ENCODE measurements at regions of chr3 and their contacts with region 1.

Region 1: GRCh38 chr3:115814778-115815380 is 191.6 kb downstream of the GAP43 start:
- DNase-seq: peak; percentile 87
- ATAC-seq: peak; percentile 91
- H3K4me3 Mint-ChIP-seq: no peak overlapping the region
- H3K27ac Mint-ChIP-seq: no peak overlapping the region
- H3K4me1 Mint-ChIP-seq: peaks cover 11% of the 10 kb centered on the region
- H3K27me3 Mint-ChIP-seq: no peaks in the 10 kb centered on the region
- CTCF ChIP-seq: peak; percentile 94

Region 2: GRCh38 chr3:115092220-115092791 is 722.6 kb before region 1 on chr3:
- CTCF ChIA-PET with region 1: interaction called, 11 read pairs
- POLR2A ChIA-PET with region 1: no interaction called
- DNase-seq: peak; percentile 44
- ATAC-seq: peak; percentile 93
- H3K4me3 Mint-ChIP-seq: no peak overlapping the region
- H3K27ac Mint-ChIP-seq: no peak overlapping the region; the same call in 1 of the 2 replicates
- H3K4me1 Mint-ChIP-seq: peaks cover 21% of the 10 kb centered on the region
- H3K27me3 Mint-ChIP-seq: no peaks in the 10 kb centered on the region
- CTCF ChIP-seq: 0 out of 2 replicates have a peak, but pooled peaks have one; percentile 8

Region 3: GRCh38 chr3:115523458-115523857 is 291.4 kb before region 1 on chr3:
- CTCF ChIA-PET with region 1: no interaction called
- POLR2A ChIA-PET with region 1: no interaction called
- DNase-seq: no peak
- ATAC-seq: peak; percentile 26; the same call in 1 of the 2 replicates
- H3K4me3 Mint-ChIP-seq: no peak overlapping the region
- H3K27ac Mint-ChIP-seq: no peak overlapping the region
- H3K4me1 Mint-ChIP-seq: peaks cover 24% of the 10 kb centered on the region
- H3K27me3 Mint-ChIP-seq: no peaks in the 10 kb centered on the region
- CTCF ChIP-seq: no peak

Region 4: GRCh38 chr3:115692887-115693524 is 121.9 kb before region 1 on chr3:
- CTCF ChIA-PET with region 1: interaction called, 11 read pairs
- POLR2A ChIA-PET with region 1: no interaction called
- DNase-seq: peak; percentile 80
- ATAC-seq: peak; percentile 94
- H3K4me3 Mint-ChIP-seq: no peak overlapping the region
- H3K27ac Mint-ChIP-seq: no peak overlapping the region
- H3K4me1 Mint-ChIP-seq: peaks cover 25% of the 10 kb centered on the region
- H3K27me3 Mint-ChIP-seq: no peaks in the 10 kb centered on the region
- CTCF ChIP-seq: peak; percentile 64

Region 5: DNA sequence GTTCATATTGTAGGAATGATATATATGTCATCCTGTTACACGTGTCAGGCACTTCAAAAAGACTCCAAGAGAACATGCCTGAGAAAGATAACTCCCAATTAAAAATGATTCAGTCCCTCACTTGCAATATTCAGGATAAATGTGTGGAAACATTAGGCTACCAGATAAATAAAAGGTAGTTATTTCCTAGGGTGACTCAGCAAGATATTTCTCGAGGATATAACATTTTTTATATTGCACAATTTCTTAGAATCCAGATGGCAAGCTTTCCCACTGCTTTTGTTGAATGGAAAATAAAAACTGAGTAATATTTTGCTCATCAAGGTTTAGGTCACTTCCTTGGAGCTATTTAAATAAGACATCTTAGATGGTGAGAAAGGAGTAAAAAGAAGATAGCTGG is 10.2 kb before region 1 on chr3:
- CTCF ChIA-PET with region 1: interaction called, 11 read pairs
- POLR2A ChIA-PET with region 1: no interaction called
- DNase-seq: no peak
- ATAC-seq: no peak
- H3K4me3 Mint-ChIP-seq: no peak overlapping the region
- H3K27ac Mint-ChIP-seq: peak overlapping the region; percentile 47; the same call in 1 of the 2 replicates
- H3K4me1 Mint-ChIP-seq: peaks cover 60% of the 10 kb centered on the region
- H3K27me3 Mint-ChIP-seq: 0 out of 2 replicates have a peak, but pooled peaks cover 4% of the 10 kb centered on the region
- CTCF ChIP-seq: no peak